Breast epithelium (tissue), 4 donors: ENCODE measurements at regions of chr4 and their contacts with region 1.

Region 1: GRCh38 chr4:74975848-74976824 is 43.2 kb downstream of the PARM1 start:
- DNase-seq: no peak
- H3K4me3 ChIP-seq: no peak overlapping the region
- H3K27ac ChIP-seq: no peak overlapping the region
- H3K4me1 ChIP-seq: no peaks in the 10 kb centered on the region
- H3K27me3 ChIP-seq: no peaks in the 10 kb centered on the region
- CTCF ChIP-seq: no peak
- POLR2A ChIP-seq: no peak

Region 2: GRCh38 chr4:74962584-74962983 is 13.6 kb before region 1 on chr4:
- intact Hi-C with region 1: loop called (anchors 1 kb)
- DNase-seq: no peak
- H3K4me3 ChIP-seq: no peak overlapping the region
- H3K27ac ChIP-seq: no peak overlapping the region
- H3K4me1 ChIP-seq: no peaks in the 10 kb centered on the region
- H3K27me3 ChIP-seq: no peaks in the 10 kb centered on the region
- CTCF ChIP-seq: no peak
- POLR2A ChIP-seq: no peak

Region 3: GRCh38 chr4:75321484-75321883 is 345.3 kb after region 1 on chr4:
- intact Hi-C with region 1: loop called (anchors 5 kb)
- DNase-seq: no peak
- H3K4me3 ChIP-seq: no peak overlapping the region
- H3K27ac ChIP-seq: no peak overlapping the region
- H3K4me1 ChIP-seq: no peaks in the 10 kb centered on the region
- H3K27me3 ChIP-seq: no peaks in the 10 kb centered on the region
- CTCF ChIP-seq: no peak
- POLR2A ChIP-seq: no peak